ENCODE measurements at regions of chr7 and their contacts with region 1.

Region 1: DNA sequence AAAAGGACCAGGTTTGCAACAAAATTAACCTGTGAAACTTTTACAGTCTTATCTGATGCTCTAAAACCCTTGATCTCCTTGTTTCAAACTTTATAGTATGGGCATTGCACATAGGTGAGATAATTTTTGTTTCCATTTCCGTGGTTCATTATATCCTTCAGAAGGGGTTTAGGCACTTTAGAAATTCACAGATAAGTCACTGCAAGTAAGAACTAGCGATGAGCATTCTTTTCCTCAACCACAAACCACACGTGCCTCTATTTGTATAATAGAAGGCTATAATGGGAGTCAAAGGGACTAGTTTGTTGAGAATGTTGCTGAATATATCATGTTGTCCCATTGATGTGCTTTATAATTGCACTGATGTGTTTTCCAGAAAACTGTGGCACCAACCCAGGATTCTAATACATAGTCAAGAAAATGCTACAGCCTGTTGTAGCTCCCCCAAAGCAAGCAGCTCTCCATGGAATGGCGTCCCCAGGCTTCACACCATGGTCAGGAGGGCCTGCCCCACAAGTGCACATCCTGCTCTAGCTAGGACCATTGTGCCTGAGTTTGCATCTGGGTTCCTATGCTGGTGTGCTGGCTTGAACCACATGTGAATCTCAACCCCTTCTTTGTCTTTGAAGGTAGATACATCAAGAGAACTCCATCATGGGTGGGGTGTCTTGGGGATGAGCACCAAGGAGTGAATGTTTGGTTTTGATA is 14.0 kb upstream of the ATXN7L1 start:
- DNase-seq: peak; percentile 84
- ATAC-seq: peak; percentile 91
- H3K4me3 Mint-ChIP-seq: no peak overlapping the region
- H3K27ac Mint-ChIP-seq: no peak overlapping the region
- H3K4me1 Mint-ChIP-seq: peaks cover 28% of the 10 kb centered on the region
- H3K27me3 Mint-ChIP-seq: no peaks in the 10 kb centered on the region
- CTCF ChIP-seq: no peak

Region 2: DNA sequence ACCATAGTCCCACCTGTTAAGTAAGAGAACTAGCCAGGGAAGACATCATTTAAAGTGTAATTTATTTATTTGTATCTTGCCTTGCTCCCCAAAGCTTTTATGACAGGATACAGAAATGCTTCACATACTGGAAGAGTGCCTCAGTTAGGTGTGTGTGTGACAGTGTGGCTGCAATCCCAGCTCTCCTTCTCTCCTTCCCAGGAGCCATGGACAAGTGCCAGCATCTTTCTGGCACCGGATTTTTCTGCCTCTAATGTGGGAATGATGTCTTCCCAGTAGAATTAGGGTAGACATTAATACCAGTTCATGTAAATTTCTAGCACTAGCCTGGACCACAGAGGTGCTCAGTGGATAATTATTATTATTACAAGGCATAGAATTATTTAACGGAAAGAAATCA is 16.3 kb after region 1 on chr7:
- CTCF ChIA-PET with region 1: no interaction called
- POLR2A ChIA-PET with region 1: no interaction called
- intact Hi-C with region 1: no loop called
- DNase-seq: no peak
- ATAC-seq: no peak
- H3K4me3 Mint-ChIP-seq: no peak overlapping the region
- H3K27ac Mint-ChIP-seq: no peak overlapping the region
- H3K4me1 Mint-ChIP-seq: peaks cover 8% of the 10 kb centered on the region
- H3K27me3 Mint-ChIP-seq: no peaks in the 10 kb centered on the region
- CTCF ChIP-seq: no peak

Region 3: DNA sequence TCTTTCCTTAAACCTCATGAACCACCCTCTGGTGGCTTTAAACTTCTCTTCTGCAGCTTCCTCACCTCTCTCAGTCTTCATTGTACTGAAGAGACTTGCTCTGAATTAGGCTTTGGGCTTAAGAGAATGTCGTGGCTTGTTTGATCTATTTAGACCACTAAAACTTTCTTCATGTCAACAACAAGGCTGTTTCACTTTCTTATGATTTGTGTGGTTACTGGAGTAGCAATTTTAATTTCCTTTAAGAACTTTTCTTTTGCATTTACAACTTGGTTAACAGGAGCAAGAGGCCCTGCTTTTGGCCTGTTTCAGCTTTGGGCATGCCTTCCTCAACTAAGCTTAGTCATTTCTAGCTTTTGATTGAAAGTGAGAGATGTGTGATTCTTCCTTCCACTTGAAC is 34.5 kb after region 1 on chr7:
- CTCF ChIA-PET with region 1: interaction called, 3 read pairs
- POLR2A ChIA-PET with region 1: no interaction called
- intact Hi-C with region 1: loop called (anchors 1 kb)
- DNase-seq: peak; percentile 67
- ATAC-seq: peak; percentile 90
- H3K4me3 Mint-ChIP-seq: no peak overlapping the region
- H3K27ac Mint-ChIP-seq: peak overlapping the region; percentile 58
- H3K4me1 Mint-ChIP-seq: peaks cover 33% of the 10 kb centered on the region
- H3K27me3 Mint-ChIP-seq: peaks cover 4% of the 10 kb centered on the region
- CTCF ChIP-seq: no peak